Endothelial cell of umbilical vein (primary cell): ENCODE measurements at regions of chr10 and their contacts with region 1.

Region 1: GRCh38 chr10:87659571-87660483 is at the start of gene PAPSS2:
- DNase-seq: peak; percentile 72
- H3K4me3 ChIP-seq: peak within 1 kb of the TSS; percentile 95 to 100 (median 99)
- H3K27ac ChIP-seq: peak within 1 kb of the TSS; percentile 96
- H3K4me1 ChIP-seq: peaks cover 56% of the 10 kb centered on the region
- H3K27me3 ChIP-seq: no peaks in the 10 kb centered on the region
- CTCF ChIP-seq: peak in 1 of 2 donors; percentile 31
- POLR2A ChIP-seq: peak; percentile 90
- total RNA-seq, gene PAPSS2: 82.6 and 93.2 TPM in 2 replicates

Region 2: GRCh38 chr10:87531908-87532622 is 127.8 kb before region 1 on chr10:
- CTCF ChIA-PET with region 1: interaction called, 7 read pairs
- POLR2A ChIA-PET with region 1: no interaction called
- dilution Hi-C with region 1: no loop called
- intact Hi-C with region 1: loop called (anchors 1 kb)
- DNase-seq: peak; percentile 87
- H3K4me3 ChIP-seq: peak overlapping the region in 1 of 3 experiments; percentile 11
- H3K27ac ChIP-seq: peak overlapping the region; percentile 59
- H3K4me1 ChIP-seq: peaks cover 17% of the 10 kb centered on the region
- H3K27me3 ChIP-seq: no peaks in the 10 kb centered on the region
- CTCF ChIP-seq: no peak
- POLR2A ChIP-seq: no peak

Region 3: DNA sequence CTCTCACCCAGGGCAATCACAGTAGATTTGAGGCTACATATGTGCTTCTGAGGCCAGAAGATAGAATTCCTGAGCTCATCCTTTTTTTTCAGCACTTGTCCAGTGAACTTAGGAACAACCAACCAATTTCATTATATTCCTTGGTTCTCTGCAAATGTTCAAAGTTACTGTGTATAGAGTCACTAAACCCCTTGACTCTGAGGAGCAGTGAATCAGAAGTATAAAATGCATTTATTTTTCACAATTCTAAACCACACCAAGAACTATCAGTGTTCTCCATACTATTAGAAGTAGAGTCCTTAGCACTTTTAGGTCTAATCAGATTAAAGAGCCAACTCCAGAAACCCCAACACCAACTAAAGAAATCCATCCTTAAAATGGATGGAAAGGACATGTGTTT is 19.8 kb before region 1 on chr10:
- CTCF ChIA-PET with region 1: no interaction called
- POLR2A ChIA-PET with region 1: no interaction called
- dilution Hi-C with region 1: no loop called
- intact Hi-C with region 1: no loop called
- DNase-seq: no peak
- H3K4me3 ChIP-seq: no peak overlapping the region
- H3K27ac ChIP-seq: no peak overlapping the region
- H3K4me1 ChIP-seq: peaks cover 13% of the 10 kb centered on the region
- H3K27me3 ChIP-seq: no peaks in the 10 kb centered on the region
- CTCF ChIP-seq: no peak
- POLR2A ChIP-seq: no peak

Region 4: DNA sequence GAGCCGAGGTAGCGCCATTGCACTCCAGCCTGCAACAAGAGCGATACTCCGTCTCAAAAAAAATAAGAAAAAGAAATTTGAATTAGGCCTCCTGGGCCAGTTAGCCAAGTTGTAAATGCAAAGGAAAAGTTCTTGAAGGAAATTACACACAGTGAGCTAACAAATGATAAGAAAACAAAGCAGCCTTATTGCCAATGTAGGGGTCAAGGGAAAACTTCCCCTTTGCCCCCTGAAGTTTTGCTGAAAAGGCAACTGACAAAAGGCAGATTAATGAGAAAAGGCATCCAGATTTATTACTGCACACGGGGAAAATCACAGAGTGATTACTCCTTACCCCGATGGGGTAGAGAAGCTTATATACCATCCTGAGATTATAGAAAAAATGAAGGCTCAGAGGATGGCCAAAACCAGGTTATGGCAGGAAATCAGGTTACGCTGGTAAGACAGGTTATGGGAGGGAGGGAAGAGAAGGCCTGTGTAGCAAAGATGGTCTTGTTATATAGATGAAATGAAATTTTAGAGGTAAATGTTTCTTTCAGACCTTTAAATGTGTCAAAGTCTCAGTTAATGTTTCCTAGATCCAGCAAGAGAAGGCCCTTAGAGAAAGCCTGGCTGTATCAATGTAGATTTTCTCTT is 70.2 kb after region 1 on chr10:
- CTCF ChIA-PET with region 1: interaction called, 68 read pairs
- POLR2A ChIA-PET with region 1: no interaction called
- dilution Hi-C with region 1: no loop called
- intact Hi-C with region 1: loop called (anchors 1 kb)
- DNase-seq: peak; percentile 61
- H3K4me3 ChIP-seq: no peak overlapping the region
- H3K27ac ChIP-seq: no peak overlapping the region
- H3K4me1 ChIP-seq: peaks cover 13% of the 10 kb centered on the region
- H3K27me3 ChIP-seq: no peaks in the 10 kb centered on the region
- CTCF ChIP-seq: no peak
- POLR2A ChIP-seq: no peak

Region 5: GRCh38 chr10:87761892-87762291 is 102.1 kb after region 1 on chr10:
- CTCF ChIA-PET with region 1: interaction called, 10 read pairs
- POLR2A ChIA-PET with region 1: interaction called, 3 read pairs
- dilution Hi-C with region 1: no loop called
- intact Hi-C with region 1: no loop called
- DNase-seq: peak; percentile 47
- H3K4me3 ChIP-seq: no peak overlapping the region
- H3K27ac ChIP-seq: no peak overlapping the region
- H3K4me1 ChIP-seq: peaks cover 29% of the 10 kb centered on the region
- H3K27me3 ChIP-seq: no peaks in the 10 kb centered on the region
- CTCF ChIP-seq: no peak
- POLR2A ChIP-seq: no peak

Region 6: DNA sequence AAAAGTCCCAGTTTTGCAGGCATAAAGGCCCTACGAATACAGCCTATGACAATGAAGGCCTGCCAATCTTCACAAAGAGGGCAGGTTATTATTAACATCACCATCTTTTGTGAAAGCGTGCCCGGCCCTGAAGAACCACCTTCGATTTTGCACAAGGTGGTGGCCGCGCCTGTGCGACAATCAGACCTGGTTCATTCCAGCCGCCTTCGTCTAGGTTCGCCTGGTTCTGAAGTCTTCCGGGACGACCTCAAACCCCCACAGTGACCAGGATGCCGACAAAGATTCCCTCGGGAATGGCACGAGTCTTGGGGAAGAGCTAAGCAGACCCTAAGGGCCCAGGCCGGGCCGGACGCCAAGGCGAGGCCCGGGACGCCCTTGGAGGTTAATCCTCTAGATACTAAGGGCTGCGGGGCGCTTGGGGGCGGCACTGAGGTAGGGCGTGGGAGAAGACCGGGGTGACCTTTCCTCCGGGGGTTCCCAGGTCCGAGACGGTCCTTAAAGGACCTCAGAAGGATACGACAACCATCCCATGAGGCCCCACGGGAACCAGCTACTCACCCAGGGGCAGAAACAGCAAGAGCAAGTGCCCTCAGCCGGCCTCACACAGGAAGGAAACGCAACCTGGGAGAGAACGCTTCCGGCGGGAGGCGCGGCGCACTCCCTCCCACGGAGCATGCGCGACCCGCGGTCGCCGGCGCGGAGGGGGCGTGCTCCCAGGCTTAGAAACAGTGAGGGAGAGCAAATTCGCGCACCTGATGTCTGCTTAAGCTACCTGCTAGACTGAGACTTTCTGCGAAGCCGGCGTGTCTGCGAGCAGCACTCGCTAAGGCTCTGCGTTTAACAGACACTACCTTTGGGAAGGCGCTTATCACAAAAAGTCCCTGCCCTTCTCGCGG is 158.0 kb after region 1 on chr10 and contains the start of gene ATAD1:
- CTCF ChIA-PET with region 1: no interaction called
- POLR2A ChIA-PET with region 1: no interaction called
- dilution Hi-C with region 1: no loop called
- intact Hi-C with region 1: loop called (anchors 2 kb)
- DNase-seq: peak; percentile 80
- H3K4me3 ChIP-seq: peak within 1 kb of the TSS; percentile 61 to 88 (median 78)
- H3K27ac ChIP-seq: peak within 1 kb of the TSS; percentile 68
- H3K4me1 ChIP-seq: peaks cover 22% of the 10 kb centered on the region
- H3K27me3 ChIP-seq: no peaks in the 10 kb centered on the region
- CTCF ChIP-seq: peak in 1 of 2 donors; percentile 5
- POLR2A ChIP-seq: peak; percentile 77
- total RNA-seq, gene ATAD1: 23.6 and 25.8 TPM in 2 replicates

Region 7: DNA sequence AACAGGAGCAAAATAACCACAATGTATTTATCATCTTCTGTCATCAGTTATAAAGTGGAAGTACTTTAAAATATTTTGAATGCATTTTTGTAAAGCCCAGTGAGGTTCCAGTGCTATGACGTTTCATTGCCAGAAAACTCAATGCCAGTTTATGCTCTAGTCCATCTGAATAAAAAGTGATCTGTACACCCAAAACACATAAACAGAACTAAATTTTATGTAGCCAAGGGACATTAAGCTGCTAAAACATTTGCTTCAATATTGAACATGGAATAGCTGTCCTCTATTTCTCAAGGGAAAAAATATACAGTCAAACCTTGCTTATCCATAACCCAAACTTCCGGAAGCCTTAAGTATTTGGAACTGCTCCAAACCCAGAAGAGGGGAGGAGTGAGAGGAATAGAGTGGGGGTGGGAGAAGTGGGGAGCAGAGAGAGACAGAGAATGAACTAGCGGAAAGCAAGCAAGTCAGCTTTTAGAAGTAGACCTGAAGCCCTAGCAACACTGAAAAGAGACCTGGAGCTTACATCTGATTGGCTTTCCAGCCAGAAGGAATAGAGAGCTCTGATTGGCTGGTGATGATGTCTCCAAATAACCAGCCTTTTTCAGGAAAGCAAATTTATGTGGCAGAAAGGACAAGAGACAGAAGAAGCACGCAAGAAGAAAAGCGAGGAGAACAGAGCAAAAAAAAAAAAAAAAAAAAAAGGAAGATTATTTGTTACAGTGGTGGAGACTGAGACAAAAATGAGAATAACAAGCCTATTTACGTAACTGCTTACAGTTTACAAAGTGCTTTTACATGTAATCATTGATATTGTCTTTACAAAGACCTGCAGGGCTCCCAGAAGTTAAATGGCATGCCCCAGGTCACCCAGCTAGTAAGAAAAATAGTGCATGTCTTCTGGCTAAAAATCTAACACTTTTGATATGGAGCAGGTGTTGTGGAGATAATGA is 727.3 kb after region 1 on chr10:
- CTCF ChIA-PET with region 1: interaction called, 11 read pairs
- POLR2A ChIA-PET with region 1: no interaction called
- dilution Hi-C with region 1: no loop called
- intact Hi-C with region 1: loop called (anchors 1 kb)
- DNase-seq: peak; percentile 88
- H3K4me3 ChIP-seq: peak overlapping the region in 1 of 3 experiments; percentile 12
- H3K27ac ChIP-seq: no peak overlapping the region
- H3K4me1 ChIP-seq: peaks cover 6% of the 10 kb centered on the region
- H3K27me3 ChIP-seq: no peaks in the 10 kb centered on the region
- CTCF ChIP-seq: no peak
- POLR2A ChIP-seq: no peak